ENCODE measurements at regions of chr4 and their contacts with region 1.

Region 1: DNA sequence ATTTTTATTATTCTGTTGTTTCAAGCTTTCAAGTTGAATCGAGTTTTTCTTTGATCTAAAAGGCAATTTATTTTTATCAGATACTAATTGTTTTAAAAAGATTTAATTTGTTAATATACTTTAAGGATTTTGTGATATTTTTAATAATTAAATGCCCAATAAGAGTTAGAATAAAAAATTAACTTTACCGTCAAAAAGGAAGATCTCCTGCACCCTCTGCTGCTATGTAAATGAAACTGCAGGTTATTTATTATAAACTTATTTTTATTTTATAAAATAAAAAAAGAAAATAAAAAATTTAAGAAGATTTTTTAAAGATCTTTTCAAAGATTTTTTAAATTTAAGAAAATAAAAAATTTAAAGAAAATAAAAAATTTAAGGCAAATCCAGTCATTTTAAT is 166.1 kb downstream of the CCSER1 start:
- DNase-seq: no peak
- ATAC-seq: no peak
- H3K4me3 ChIP-seq: no peak overlapping the region
- H3K27ac ChIP-seq: no peak overlapping the region
- H3K4me1 ChIP-seq: no peaks in the 10 kb centered on the region
- H3K27me3 ChIP-seq: no peaks in the 10 kb centered on the region
- CTCF ChIP-seq: peak in 2 of 3 experiments; percentile 18 to 22; a peak in 2 of 6 replicates
- EP300 ChIP-seq: no peak
- POLR2A ChIP-seq: no peak
- RAD21 ChIP-seq: peak; percentile 72

Region 2: GRCh38 chr4:89657931-89658700 is 635.2 kb before region 1 on chr4:
- CTCF ChIA-PET with region 1: interaction called, 12 read pairs
- POLR2A ChIA-PET with region 1: no interaction called
- RAD21 ChIA-PET with region 1: no interaction called
- SMC1A ChIA-PET with region 1: no interaction called
- in situ Hi-C with region 1: no loop called
- intact Hi-C with region 1: no loop called
- DNase-seq: no peak
- ATAC-seq: peak; percentile 78
- H3K4me3 ChIP-seq: no peak overlapping the region
- H3K27ac ChIP-seq: no peak overlapping the region; the same call in 1 of the 2 replicates
- H3K4me1 ChIP-seq: peaks cover 4% of the 10 kb centered on the region; the same call in 1 of the 2 replicates
- H3K27me3 ChIP-seq: no peaks in the 10 kb centered on the region
- CTCF ChIP-seq: peak; percentile 14 to 40 (median 38); a peak in 5 of 6 replicates
- EP300 ChIP-seq: no peak
- POLR2A ChIP-seq: no peak
- RAD21 ChIP-seq: peak; percentile 36; the same call in 1 of the 2 replicates

Region 3: GRCh38 chr4:89914609-89915550 is 378.4 kb before region 1 on chr4:
- CTCF ChIA-PET with region 1: interaction called, 6 read pairs
- POLR2A ChIA-PET with region 1: no interaction called
- RAD21 ChIA-PET with region 1: interaction called, 7 read pairs
- SMC1A ChIA-PET with region 1: interaction called, 5 read pairs
- in situ Hi-C with region 1: no loop called
- intact Hi-C with region 1: loop called (anchors 5 kb)
- DNase-seq: no peak
- ATAC-seq: peak; percentile 40
- H3K4me3 ChIP-seq: no peak overlapping the region
- H3K27ac ChIP-seq: no peak overlapping the region
- H3K4me1 ChIP-seq: no peaks in the 10 kb centered on the region
- H3K27me3 ChIP-seq: no peaks in the 10 kb centered on the region
- CTCF ChIP-seq: no peak; a peak in 1 of 6 replicates
- EP300 ChIP-seq: no peak
- POLR2A ChIP-seq: no peak
- RAD21 ChIP-seq: 0 out of 2 replicates have a peak, but pooled peaks have one; percentile 28

Region 4: DNA sequence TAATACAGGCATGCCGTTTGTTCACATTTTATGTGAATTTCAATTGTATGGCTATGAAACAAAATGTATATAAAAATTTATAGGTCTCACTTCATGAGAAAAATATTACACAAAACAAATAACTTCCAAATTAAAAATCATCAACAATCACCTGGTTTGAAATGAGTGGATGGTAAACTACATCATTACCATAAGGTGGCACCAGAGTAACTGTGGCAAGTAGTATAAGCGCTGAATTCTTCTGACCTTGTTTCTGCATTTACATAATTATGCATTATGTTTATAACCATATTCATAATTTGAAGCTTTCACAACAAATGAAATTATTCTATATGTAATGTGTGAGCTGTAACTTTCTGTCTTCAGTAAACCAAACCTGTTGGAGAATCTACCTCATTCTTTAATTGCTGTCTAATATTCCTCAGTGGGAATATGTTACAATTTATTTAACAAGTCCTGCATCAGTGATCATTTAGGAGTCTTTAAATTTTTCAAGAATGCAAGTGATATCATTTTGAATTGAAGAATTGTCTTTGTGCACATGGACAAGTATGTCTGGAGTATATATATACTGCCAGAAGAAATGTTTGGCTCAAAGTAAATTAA is 343.4 kb before region 1 on chr4:
- CTCF ChIA-PET with region 1: interaction called, 7 read pairs
- POLR2A ChIA-PET with region 1: no interaction called
- RAD21 ChIA-PET with region 1: no interaction called
- SMC1A ChIA-PET with region 1: interaction called, 3 read pairs
- in situ Hi-C with region 1: loop called (anchors 5 kb)
- intact Hi-C with region 1: loop called (anchors 2 kb)
- DNase-seq: no peak
- ATAC-seq: peak; percentile 74
- H3K4me3 ChIP-seq: no peak overlapping the region
- H3K27ac ChIP-seq: no peak overlapping the region
- H3K4me1 ChIP-seq: no peaks in the 10 kb centered on the region
- H3K27me3 ChIP-seq: no peaks in the 10 kb centered on the region
- CTCF ChIP-seq: peak; percentile 32 to 47 (median 44); a peak in 3 of 6 replicates
- EP300 ChIP-seq: no peak
- POLR2A ChIP-seq: no peak
- RAD21 ChIP-seq: peak; percentile 50

Region 5: DNA sequence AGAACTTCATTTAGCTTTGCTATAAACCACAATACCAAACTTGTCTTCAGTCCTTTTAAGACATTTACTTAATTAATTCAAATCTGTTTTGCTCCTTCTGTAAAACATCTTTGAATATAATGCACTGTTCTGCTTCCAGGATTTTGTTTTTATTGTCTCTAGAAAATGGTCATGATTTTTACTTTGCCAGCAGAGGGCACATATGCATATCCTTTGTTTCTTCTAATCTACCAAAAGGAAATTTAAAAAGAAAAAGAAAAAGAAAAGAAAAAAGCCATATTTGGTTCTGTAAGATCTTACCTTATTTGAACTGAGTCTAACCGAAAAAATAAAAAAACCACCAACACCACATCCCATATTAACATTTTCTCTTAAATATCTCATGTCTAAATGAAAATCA is 268.1 kb before region 1 on chr4:
- CTCF ChIA-PET with region 1: interaction called, 19 read pairs
- POLR2A ChIA-PET with region 1: no interaction called
- RAD21 ChIA-PET with region 1: interaction called, 4 read pairs
- SMC1A ChIA-PET with region 1: interaction called, 19 read pairs
- in situ Hi-C with region 1: loop called (anchors 10 kb)
- intact Hi-C with region 1: loop called (anchors 2 kb)
- DNase-seq: no peak
- ATAC-seq: no peak
- H3K4me3 ChIP-seq: no peak overlapping the region
- H3K27ac ChIP-seq: no peak overlapping the region
- H3K4me1 ChIP-seq: peaks cover 9% of the 10 kb centered on the region
- H3K27me3 ChIP-seq: no peaks in the 10 kb centered on the region
- CTCF ChIP-seq: peak in 2 of 3 experiments; percentile 19 to 20; a peak in 3 of 6 replicates
- EP300 ChIP-seq: no peak
- POLR2A ChIP-seq: no peak
- RAD21 ChIP-seq: peak; percentile 46

Region 6: DNA sequence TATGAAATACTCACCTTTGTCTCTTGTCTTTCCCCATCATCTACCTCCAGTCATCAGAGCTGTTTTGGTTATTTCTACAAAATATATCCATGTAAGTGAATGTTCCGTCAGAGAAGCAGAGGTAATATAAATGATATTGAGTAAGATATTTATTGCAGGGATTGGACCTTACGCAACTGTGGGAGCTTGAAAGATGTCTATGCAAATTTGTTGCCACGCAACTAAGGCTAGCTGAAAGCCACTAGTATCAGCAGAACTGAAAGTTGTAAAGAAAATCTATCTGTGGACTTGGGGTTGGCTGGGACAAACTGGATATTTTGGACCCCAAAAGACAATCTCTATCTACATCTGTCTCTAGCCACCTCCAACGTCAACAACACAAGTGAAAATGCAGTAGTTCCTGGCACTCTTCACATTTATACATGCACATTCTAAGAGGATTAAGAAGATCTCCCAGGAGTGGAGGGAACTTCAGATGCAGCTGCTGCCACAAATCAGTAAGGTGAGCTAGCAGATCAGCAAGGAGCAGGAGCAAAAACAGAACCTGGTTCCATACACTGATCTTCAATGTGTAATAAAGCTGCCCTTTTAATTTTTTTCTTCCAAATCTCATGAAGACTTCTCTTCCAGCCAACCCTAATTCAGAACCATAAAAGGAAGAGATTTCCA is 174.7 kb before region 1 on chr4:
- CTCF ChIA-PET with region 1: interaction called, 14 read pairs
- POLR2A ChIA-PET with region 1: no interaction called
- RAD21 ChIA-PET with region 1: interaction called, 5 read pairs
- SMC1A ChIA-PET with region 1: no interaction called
- in situ Hi-C with region 1: loop called (anchors 10 kb)
- intact Hi-C with region 1: loop called (anchors 2 kb)
- DNase-seq: no peak
- ATAC-seq: peak; percentile 75
- H3K4me3 ChIP-seq: no peak overlapping the region
- H3K27ac ChIP-seq: peak overlapping the region; percentile 32; the same call in 1 of the 2 replicates
- H3K4me1 ChIP-seq: peaks cover 21% of the 10 kb centered on the region
- H3K27me3 ChIP-seq: no peaks in the 10 kb centered on the region
- CTCF ChIP-seq: no peak
- EP300 ChIP-seq: no peak
- POLR2A ChIP-seq: no peak
- RAD21 ChIP-seq: no peak

Region 7: GRCh38 chr4:90345549-90346215 is 52.4 kb after region 1 on chr4:
- CTCF ChIA-PET with region 1: no interaction called
- POLR2A ChIA-PET with region 1: no interaction called
- RAD21 ChIA-PET with region 1: no interaction called
- SMC1A ChIA-PET with region 1: no interaction called
- in situ Hi-C with region 1: no loop called
- intact Hi-C with region 1: no loop called
- DNase-seq: no peak
- ATAC-seq: no peak
- H3K4me3 ChIP-seq: no peak overlapping the region
- H3K27ac ChIP-seq: no peak overlapping the region
- H3K4me1 ChIP-seq: no peaks in the 10 kb centered on the region
- H3K27me3 ChIP-seq: no peaks in the 10 kb centered on the region
- CTCF ChIP-seq: no peak
- EP300 ChIP-seq: no peak
- POLR2A ChIP-seq: no peak
- RAD21 ChIP-seq: no peak

Region 8: DNA sequence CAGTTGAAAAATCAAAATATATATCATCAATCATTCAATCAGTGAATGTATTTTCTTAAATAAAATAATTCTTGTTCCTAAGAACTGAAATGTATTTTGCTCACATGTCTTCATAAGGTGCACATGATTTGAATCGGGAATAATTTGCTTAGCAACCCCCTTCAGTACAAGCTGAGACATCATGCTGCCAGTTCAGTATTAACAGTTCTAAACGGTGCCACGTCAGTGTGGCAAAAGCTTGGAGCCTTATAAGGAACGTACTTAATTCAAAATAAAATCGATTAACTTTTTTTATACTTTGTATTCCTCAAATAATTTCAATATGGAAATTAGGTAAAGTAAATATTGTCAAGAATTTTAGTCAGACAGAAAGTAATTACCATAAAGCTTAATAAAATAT is 121.8 kb after region 1 on chr4:
- CTCF ChIA-PET with region 1: no interaction called
- POLR2A ChIA-PET with region 1: no interaction called
- RAD21 ChIA-PET with region 1: no interaction called
- SMC1A ChIA-PET with region 1: no interaction called
- in situ Hi-C with region 1: no loop called
- intact Hi-C with region 1: no loop called
- DNase-seq: no peak
- ATAC-seq: no peak
- H3K4me3 ChIP-seq: no peak overlapping the region
- H3K27ac ChIP-seq: no peak overlapping the region
- H3K4me1 ChIP-seq: no peaks in the 10 kb centered on the region
- H3K27me3 ChIP-seq: no peaks in the 10 kb centered on the region
- CTCF ChIP-seq: no peak
- EP300 ChIP-seq: no peak
- POLR2A ChIP-seq: no peak
- RAD21 ChIP-seq: no peak

Measured in GM12878 (cell line).